Endothelial cell of umbilical vein (primary cell): ENCODE measurements at regions of chr22 and their contacts with region 1.

Region 1: DNA sequence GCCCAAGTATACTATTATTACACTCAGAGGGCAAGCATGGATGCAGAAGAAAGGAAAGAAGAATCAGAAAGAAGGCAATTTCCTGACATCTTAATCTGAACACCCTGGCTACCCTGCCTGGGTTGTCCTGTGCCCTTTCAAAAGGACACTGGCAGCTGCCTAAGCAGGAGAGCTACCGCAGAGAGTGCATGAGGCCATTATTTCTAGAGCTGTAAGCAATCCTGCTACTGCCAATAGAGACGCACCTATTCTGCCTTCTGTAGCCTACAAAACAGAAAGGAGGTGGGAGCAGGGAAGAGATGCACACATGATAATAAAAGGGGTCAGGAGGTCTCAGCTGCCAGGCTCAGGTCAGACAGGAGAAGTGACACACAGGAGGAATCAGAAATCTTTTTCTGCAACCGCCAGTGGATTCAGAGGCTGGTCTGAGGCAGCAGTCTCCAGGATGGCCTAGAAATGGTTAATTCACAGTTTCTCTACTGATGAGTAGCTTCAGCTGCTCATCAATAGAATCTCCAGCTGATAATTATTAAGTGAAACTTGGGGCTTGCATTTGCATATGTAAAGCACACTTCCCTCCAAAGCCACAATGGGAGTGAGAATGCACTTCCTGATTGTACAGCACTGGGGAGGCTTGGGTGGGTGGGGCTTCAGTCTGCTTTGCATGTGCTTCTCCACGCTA is 253.9 kb downstream of the LARGE1 start:
- DNase-seq: no peak
- H3K4me3 ChIP-seq: no peak overlapping the region
- H3K27ac ChIP-seq: no peak overlapping the region
- H3K4me1 ChIP-seq: no peaks in the 10 kb centered on the region
- H3K27me3 ChIP-seq: no peaks in the 10 kb centered on the region
- CTCF ChIP-seq: no peak
- POLR2A ChIP-seq: no peak

Region 2: DNA sequence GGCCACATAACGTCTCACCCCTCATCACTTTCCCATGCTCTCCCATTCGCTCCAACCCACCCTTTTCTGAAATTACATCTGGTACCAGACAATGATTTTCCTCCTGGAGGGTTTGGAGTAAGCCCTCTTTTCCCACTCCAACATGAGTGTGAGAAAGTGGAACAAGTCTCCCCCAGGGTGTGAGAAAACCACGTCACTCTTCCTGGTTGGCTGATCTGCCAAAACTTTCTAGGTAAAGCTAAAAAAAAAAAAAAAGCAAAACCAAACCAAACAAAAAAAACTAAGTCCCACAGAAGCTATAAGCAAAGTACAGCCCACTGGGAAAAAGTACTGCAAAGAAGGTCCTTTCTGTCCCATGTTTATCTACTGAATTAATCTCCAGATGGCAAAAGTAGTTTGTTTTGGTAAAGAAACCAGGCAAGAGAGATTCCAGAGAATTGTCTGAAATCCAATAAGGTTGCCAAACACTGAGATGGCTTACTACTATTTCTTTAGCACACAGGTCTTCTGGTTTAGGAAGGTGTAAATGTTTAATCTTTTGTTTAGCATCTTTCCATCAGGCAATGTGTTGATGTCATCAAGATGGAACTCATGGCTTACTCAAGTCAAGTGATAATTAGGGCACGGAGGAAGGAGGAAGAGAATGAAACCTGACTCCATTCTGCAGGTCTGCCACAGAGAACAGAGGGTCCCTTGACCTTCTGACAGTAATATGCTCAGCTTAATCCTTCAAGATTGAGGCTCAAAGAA is 141.7 kb before region 1 on chr22:
- CTCF ChIA-PET with region 1: no interaction called
- POLR2A ChIA-PET with region 1: no interaction called
- dilution Hi-C with region 1: no loop called
- intact Hi-C with region 1: no loop called
- DNase-seq: no peak
- H3K4me3 ChIP-seq: no peak overlapping the region
- H3K27ac ChIP-seq: no peak overlapping the region
- H3K4me1 ChIP-seq: no peaks in the 10 kb centered on the region
- H3K27me3 ChIP-seq: no peaks in the 10 kb centered on the region
- CTCF ChIP-seq: no peak
- POLR2A ChIP-seq: no peak

Region 3: DNA sequence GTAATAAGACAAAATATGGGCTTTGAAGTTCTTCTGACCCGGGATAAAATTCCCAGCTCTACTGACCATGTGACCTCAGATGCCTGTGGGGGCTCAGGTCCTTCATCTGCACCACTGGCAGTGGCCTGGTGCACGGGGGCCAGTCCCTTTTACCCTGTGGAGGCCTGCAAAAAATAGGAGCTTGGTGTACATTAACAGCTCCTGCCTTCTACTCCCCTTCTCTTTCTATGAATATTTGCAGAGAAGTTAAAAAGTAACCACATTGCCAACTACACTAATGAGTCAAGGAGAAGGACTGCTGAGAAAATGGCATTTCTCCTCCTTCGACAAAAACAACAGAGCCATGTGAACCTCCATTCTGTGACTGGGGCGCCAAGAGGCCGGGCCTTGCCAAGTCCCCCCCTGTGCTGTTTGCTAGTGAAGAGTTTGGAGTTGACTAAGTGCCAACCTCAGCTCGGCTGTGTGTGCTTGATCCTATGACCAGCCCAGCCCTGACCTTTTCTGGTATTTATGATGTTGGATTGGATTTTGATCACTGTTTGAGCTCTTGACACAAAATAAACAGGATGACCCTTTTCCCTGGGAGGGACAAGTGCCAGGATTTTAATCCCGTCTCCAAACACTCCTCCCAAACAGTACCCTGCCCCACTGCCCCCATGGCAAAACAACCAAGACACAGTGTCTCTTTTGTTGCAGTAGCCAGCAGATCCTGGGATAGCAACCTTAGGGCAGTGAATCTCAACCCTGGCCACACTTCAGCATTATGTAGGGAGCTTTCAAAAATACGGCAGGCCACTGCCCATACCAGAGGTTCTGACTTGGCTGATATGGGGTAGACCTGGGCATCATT is 126.3 kb before region 1 on chr22:
- CTCF ChIA-PET with region 1: no interaction called
- POLR2A ChIA-PET with region 1: no interaction called
- dilution Hi-C with region 1: no loop called
- intact Hi-C with region 1: loop called (anchors 10 kb)
- DNase-seq: no peak
- H3K4me3 ChIP-seq: no peak overlapping the region
- H3K27ac ChIP-seq: no peak overlapping the region
- H3K4me1 ChIP-seq: no peaks in the 10 kb centered on the region
- H3K27me3 ChIP-seq: no peaks in the 10 kb centered on the region
- CTCF ChIP-seq: no peak
- POLR2A ChIP-seq: no peak

Region 4: GRCh38 chr22:33588860-33589259 is 77.6 kb before region 1 on chr22:
- CTCF ChIA-PET with region 1: no interaction called
- POLR2A ChIA-PET with region 1: no interaction called
- dilution Hi-C with region 1: no loop called
- intact Hi-C with region 1: no loop called
- DNase-seq: no peak
- H3K4me3 ChIP-seq: no peak overlapping the region
- H3K27ac ChIP-seq: no peak overlapping the region
- H3K4me1 ChIP-seq: no peaks in the 10 kb centered on the region
- H3K27me3 ChIP-seq: no peaks in the 10 kb centered on the region
- CTCF ChIP-seq: no peak
- POLR2A ChIP-seq: no peak

Region 5: GRCh38 chr22:33605666-33606065 is 60.8 kb before region 1 on chr22:
- CTCF ChIA-PET with region 1: no interaction called
- POLR2A ChIA-PET with region 1: no interaction called
- dilution Hi-C with region 1: no loop called
- intact Hi-C with region 1: loop called (anchors 10 kb)
- DNase-seq: no peak
- H3K4me3 ChIP-seq: no peak overlapping the region
- H3K27ac ChIP-seq: no peak overlapping the region
- H3K4me1 ChIP-seq: no peaks in the 10 kb centered on the region
- H3K27me3 ChIP-seq: no peaks in the 10 kb centered on the region
- CTCF ChIP-seq: no peak
- POLR2A ChIP-seq: no peak

Region 6: DNA sequence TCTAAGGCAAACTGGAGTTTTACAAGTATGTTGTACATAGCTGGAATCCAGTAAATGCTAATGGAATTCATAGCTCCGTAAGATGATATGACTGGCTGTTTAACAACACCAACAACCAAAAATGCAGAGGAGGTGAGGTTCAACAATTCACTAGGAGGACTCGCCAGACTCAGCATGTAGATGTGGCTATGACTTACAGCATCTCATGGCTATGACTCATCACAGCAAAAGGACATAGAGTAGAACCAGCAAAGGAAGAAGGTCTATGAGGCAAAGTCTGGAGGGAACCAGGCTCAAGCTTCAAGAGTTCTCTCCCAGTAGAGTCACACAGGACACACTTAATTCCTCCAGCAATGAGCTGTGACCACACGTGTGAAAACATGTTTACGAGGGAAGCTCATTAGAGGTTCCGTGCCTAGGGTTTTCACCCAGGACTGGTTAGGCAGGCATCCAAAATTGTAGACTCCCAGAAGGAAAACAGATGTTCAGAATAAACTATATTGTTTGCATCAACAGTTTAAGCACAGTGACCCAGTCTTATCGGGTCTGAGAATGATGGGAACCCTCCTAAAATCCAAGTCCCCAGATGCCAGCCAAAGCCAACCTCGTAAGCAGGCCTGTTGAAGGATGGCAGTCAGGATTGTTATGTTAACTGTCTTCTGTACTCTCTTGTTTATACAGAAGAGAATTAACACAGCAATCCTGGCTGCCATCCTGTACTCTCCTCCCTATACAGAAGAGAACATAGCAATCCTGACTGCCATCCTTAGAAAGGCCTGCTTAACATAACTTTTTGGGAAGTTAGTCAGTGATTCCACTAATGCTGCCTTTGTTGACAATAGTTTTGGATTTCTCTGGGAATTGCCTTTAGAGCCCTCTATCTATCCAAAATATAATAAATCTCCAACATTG is 137.2 kb after region 1 on chr22:
- CTCF ChIA-PET with region 1: no interaction called
- POLR2A ChIA-PET with region 1: no interaction called
- dilution Hi-C with region 1: no loop called
- intact Hi-C with region 1: no loop called
- DNase-seq: no peak
- H3K4me3 ChIP-seq: no peak overlapping the region
- H3K27ac ChIP-seq: no peak overlapping the region
- H3K4me1 ChIP-seq: no peaks in the 10 kb centered on the region
- H3K27me3 ChIP-seq: no peaks in the 10 kb centered on the region
- CTCF ChIP-seq: no peak
- POLR2A ChIP-seq: no peak